GM12878 (cell line): ENCODE measurements at regions of chr6 and their contacts with region 1.

Region 1: GRCh38 chr6:138001750-138002349 is 105.4 kb downstream of the PERP start:
- DNase-seq: no peak
- ATAC-seq: peak; percentile 62
- H3K4me3 ChIP-seq: no peak overlapping the region
- H3K27ac ChIP-seq: no peak overlapping the region
- H3K4me1 ChIP-seq: no peaks in the 10 kb centered on the region
- H3K27me3 ChIP-seq: no peaks in the 10 kb centered on the region
- CTCF ChIP-seq: peak; percentile 73 to 91 (median 85)
- EP300 ChIP-seq: no peak
- POLR2A ChIP-seq: no peak
- RAD21 ChIP-seq: peak; percentile 89

Region 2: GRCh38 chr6:137697267-137697938 is 304.4 kb before region 1 on chr6:
- CTCF ChIA-PET with region 1: interaction called, 28 read pairs
- POLR2A ChIA-PET with region 1: no interaction called
- RAD21 ChIA-PET with region 1: interaction called, 8 read pairs
- SMC1A ChIA-PET with region 1: interaction called, 4 read pairs
- in situ Hi-C with region 1: loop called (anchors 10 kb)
- intact Hi-C with region 1: no loop called
- DNase-seq: no peak
- ATAC-seq: peak; percentile 80
- H3K4me3 ChIP-seq: no peak overlapping the region
- H3K27ac ChIP-seq: no peak overlapping the region
- H3K4me1 ChIP-seq: peaks cover 13% of the 10 kb centered on the region
- H3K27me3 ChIP-seq: no peaks in the 10 kb centered on the region
- CTCF ChIP-seq: peak; percentile 14 to 35 (median 27); a peak in 5 of 6 replicates
- EP300 ChIP-seq: no peak
- POLR2A ChIP-seq: no peak
- RAD21 ChIP-seq: peak; percentile 58

Region 3: GRCh38 chr6:137878486-137879285 is 123.2 kb before region 1 on chr6:
- CTCF ChIA-PET with region 1: interaction called, 106 read pairs
- POLR2A ChIA-PET with region 1: no interaction called
- RAD21 ChIA-PET with region 1: interaction called, 10 read pairs
- SMC1A ChIA-PET with region 1: interaction called, 50 read pairs
- in situ Hi-C with region 1: no loop called
- intact Hi-C with region 1: no loop called
- DNase-seq: no peak
- ATAC-seq: peak; percentile 4; the same call in 2 of the 3 replicates
- H3K4me3 ChIP-seq: peak overlapping the region; percentile 56; the same call in 1 of the 2 replicates
- H3K27ac ChIP-seq: peak overlapping the region; percentile 9; the same call in 1 of the 2 replicates
- H3K4me1 ChIP-seq: peaks cover 10% of the 10 kb centered on the region; the same call in 1 of the 2 replicates
- H3K27me3 ChIP-seq: no peaks in the 10 kb centered on the region
- CTCF ChIP-seq: no peak; a peak in 2 of 6 replicates
- EP300 ChIP-seq: no peak
- POLR2A ChIP-seq: peak; percentile 53; the same call in 1 of the 2 replicates
- RAD21 ChIP-seq: no peak

Region 4: GRCh38 chr6:137975188-137975940 is 26.5 kb before region 1 on chr6:
- CTCF ChIA-PET with region 1: interaction called, 160 read pairs
- POLR2A ChIA-PET with region 1: interaction called, 3 read pairs
- RAD21 ChIA-PET with region 1: interaction called, 19 read pairs
- SMC1A ChIA-PET with region 1: interaction called, 29 read pairs
- in situ Hi-C with region 1: no loop called
- intact Hi-C with region 1: no loop called
- DNase-seq: peak; percentile 53
- ATAC-seq: peak; percentile 67
- H3K4me3 ChIP-seq: peak overlapping the region; percentile 1; the same call in 1 of the 2 replicates
- H3K27ac ChIP-seq: peak overlapping the region; percentile 34
- H3K4me1 ChIP-seq: peaks cover 36% of the 10 kb centered on the region
- H3K27me3 ChIP-seq: no peaks in the 10 kb centered on the region
- CTCF ChIP-seq: peak; percentile 23 to 62 (median 44); a peak in 5 of 6 replicates
- EP300 ChIP-seq: no peak
- POLR2A ChIP-seq: no peak
- RAD21 ChIP-seq: peak; percentile 81

Region 5: GRCh38 chr6:138012682-138013081 is 10.8 kb after region 1 on chr6:
- CTCF ChIA-PET with region 1: interaction called, 39 read pairs
- POLR2A ChIA-PET with region 1: interaction called, 3 read pairs
- RAD21 ChIA-PET with region 1: interaction called, 3 read pairs
- SMC1A ChIA-PET with region 1: interaction called, 12 read pairs
- in situ Hi-C with region 1: no loop called
- intact Hi-C with region 1: no loop called
- DNase-seq: no peak
- ATAC-seq: no peak
- H3K4me3 ChIP-seq: no peak overlapping the region
- H3K27ac ChIP-seq: no peak overlapping the region
- H3K4me1 ChIP-seq: no peaks in the 10 kb centered on the region
- H3K27me3 ChIP-seq: no peaks in the 10 kb centered on the region
- CTCF ChIP-seq: no peak
- EP300 ChIP-seq: no peak
- POLR2A ChIP-seq: no peak
- RAD21 ChIP-seq: no peak

Region 6: DNA sequence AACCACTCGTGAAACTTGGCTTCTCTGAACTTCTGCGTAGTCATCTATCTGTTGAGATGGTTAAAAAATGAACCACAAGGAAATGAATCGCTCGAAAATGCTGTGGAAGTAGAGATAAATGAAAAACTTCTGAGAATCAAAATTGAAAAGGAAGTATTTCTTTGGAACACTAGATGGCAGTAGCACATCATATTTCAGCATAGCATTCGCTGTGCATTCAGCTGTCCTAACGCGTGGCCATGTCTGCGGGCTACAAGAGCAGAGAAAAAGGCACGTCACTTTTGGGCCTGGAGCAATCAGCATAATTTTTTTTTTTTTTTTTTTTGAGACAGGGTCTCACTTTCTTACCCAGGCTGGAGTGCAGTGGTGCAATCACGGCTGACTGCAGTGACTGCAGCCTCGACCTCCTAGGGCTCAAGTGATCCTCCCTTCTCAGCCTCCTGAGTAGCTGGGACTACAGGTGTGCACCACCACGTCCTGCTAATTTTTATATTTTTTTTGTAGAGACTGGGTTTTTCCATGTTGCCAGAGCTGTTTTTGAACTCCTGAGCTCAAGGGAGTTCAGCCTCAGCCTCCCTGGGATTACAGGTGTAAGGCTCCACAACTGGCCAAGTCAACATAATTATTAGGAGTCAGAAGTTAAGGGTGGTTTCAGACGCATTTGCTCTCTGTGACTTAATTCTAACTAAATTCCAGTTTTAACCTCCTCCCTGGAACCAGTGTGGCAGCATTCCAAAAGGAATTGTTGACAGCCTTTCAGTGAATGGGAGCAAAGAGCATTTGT is 114.2 kb after region 1 on chr6:
- CTCF ChIA-PET with region 1: interaction called, 30 read pairs
- POLR2A ChIA-PET with region 1: no interaction called
- RAD21 ChIA-PET with region 1: interaction called, 6 read pairs
- SMC1A ChIA-PET with region 1: interaction called, 10 read pairs
- in situ Hi-C with region 1: loop called (anchors 5 kb)
- intact Hi-C with region 1: no loop called
- DNase-seq: peak; percentile 33
- ATAC-seq: peak; percentile 97
- H3K4me3 ChIP-seq: no peak overlapping the region
- H3K27ac ChIP-seq: no peak overlapping the region
- H3K4me1 ChIP-seq: no peaks in the 10 kb centered on the region
- H3K27me3 ChIP-seq: peaks cover 0 to 2% of the 10 kb centered on the region in 2 experiments; a peak in 1 of 4 replicates
- CTCF ChIP-seq: peak; percentile 53 to 86 (median 64); a peak in 5 of 6 replicates
- EP300 ChIP-seq: no peak
- POLR2A ChIP-seq: no peak
- RAD21 ChIP-seq: peak; percentile 82